CD8-positive, alpha-beta T cell (primary cell): ENCODE measurements at regions of chr2 and their contacts with region 1.

Region 1: GRCh38 chr2:241686649-241687425 is at the start of gene DTYMK:
- DNase-seq: peak; percentile 89 to 98 (median 95)
- ATAC-seq: peak; percentile 95
- H3K4me3 ChIP-seq: peak within 1 kb of the TSS; percentile 87 to 98
- H3K4me3 Mint-ChIP-seq: peak within 1 kb of the TSS; percentile 90
- H3K27ac ChIP-seq: peak within 1 kb of the TSS; percentile 74 to 81
- H3K27ac Mint-ChIP-seq: peak within 1 kb of the TSS; percentile 91
- H3K4me1 ChIP-seq: peaks cover 21% of the 10 kb centered on the region
- H3K4me1 Mint-ChIP-seq: peaks cover 24% of the 10 kb centered on the region
- H3K27me3 ChIP-seq: no peaks in the 10 kb centered on the region
- H3K27me3 Mint-ChIP-seq: no peaks in the 10 kb centered on the region
- CTCF ChIP-seq: no peak
- total RNA-seq, gene DTYMK: 3.7 to 6.0 TPM

Region 2: GRCh38 chr2:241325257-241325656 is 361.6 kb before region 1 on chr2:
- CTCF ChIA-PET with region 1: no interaction called
- POLR2A ChIA-PET with region 1: no interaction called
- intact Hi-C with region 1: no loop called
- DNase-seq: no peak
- ATAC-seq: no peak
- H3K4me3 ChIP-seq: no peak overlapping the region
- H3K4me3 Mint-ChIP-seq: no peak overlapping the region
- H3K27ac ChIP-seq: no peak overlapping the region
- H3K27ac Mint-ChIP-seq: peak overlapping the region; percentile 2
- H3K4me1 ChIP-seq: peaks cover 10% of the 10 kb centered on the region
- H3K4me1 Mint-ChIP-seq: peaks cover 50% of the 10 kb centered on the region
- H3K27me3 ChIP-seq: no peaks in the 10 kb centered on the region
- H3K27me3 Mint-ChIP-seq: no peaks in the 10 kb centered on the region
- CTCF ChIP-seq: no peak

Region 3: GRCh38 chr2:241609859-241610793 is 76.7 kb before region 1 on chr2:
- CTCF ChIA-PET with region 1: no interaction called
- POLR2A ChIA-PET with region 1: no interaction called
- intact Hi-C with region 1: loop called in 1 of 2 experiments (anchors 1 kb)
- DNase-seq: peak; percentile 81 to 96 (median 92)
- ATAC-seq: peak; percentile 99
- H3K4me3 ChIP-seq: peak overlapping the region; percentile 53 to 59
- H3K4me3 Mint-ChIP-seq: peak overlapping the region; percentile 63
- H3K27ac ChIP-seq: peak overlapping the region; percentile 51 to 77
- H3K27ac Mint-ChIP-seq: peak overlapping the region; percentile 72
- H3K4me1 ChIP-seq: peaks cover 23% of the 10 kb centered on the region
- H3K4me1 Mint-ChIP-seq: peaks cover 26% of the 10 kb centered on the region
- H3K27me3 ChIP-seq: no peaks in the 10 kb centered on the region
- H3K27me3 Mint-ChIP-seq: no peaks in the 10 kb centered on the region
- CTCF ChIP-seq: peak; percentile 63

Region 4: DNA sequence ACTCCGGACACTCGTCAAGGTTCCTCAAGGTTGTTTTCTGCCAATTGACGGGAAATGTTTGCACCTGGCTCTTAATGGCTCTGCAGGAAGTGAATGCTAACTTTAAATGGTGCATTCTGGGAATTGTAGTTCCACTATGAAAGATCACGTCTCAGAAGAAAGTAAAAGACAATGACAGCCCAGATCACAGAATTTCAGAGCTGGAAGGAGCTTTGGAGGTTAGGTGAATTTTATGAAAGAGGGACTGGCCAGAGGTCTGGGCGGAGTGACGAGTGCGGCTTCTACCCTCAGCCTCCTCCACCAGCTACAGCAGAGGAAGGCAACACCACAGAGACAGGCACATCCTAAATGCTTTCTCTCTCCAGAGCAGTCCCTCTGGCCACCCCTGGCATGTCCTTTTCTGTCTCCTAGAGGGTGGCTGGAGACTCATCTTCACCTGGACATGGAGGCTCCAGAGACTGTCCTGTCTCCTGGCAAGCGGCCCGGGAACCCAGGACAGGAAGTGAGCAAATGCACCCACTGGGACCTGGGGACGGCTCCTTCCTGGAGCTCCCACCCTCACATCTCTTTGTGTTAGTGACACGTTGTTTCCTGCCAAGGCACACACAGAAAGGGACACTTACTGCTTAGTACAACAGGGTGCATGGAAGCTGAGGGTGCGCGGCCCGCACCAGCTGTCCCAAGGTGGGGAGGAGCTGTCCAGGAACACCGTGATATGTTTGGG is 69.2 kb before region 1 on chr2:
- CTCF ChIA-PET with region 1: no interaction called
- POLR2A ChIA-PET with region 1: no interaction called
- intact Hi-C with region 1: loop called in 1 of 2 experiments (anchors 2 kb)
- DNase-seq: peak in 6 of 9 experiments; percentile 11 to 80 (median 46)
- ATAC-seq: peak; percentile 86
- H3K4me3 ChIP-seq: peak overlapping the region; percentile 55 to 73
- H3K4me3 Mint-ChIP-seq: peak overlapping the region; percentile 89
- H3K27ac ChIP-seq: peak overlapping the region; percentile 61 to 70
- H3K27ac Mint-ChIP-seq: peak overlapping the region; percentile 88
- H3K4me1 ChIP-seq: peaks cover 15% of the 10 kb centered on the region
- H3K4me1 Mint-ChIP-seq: peaks cover 31% of the 10 kb centered on the region
- H3K27me3 ChIP-seq: no peaks in the 10 kb centered on the region
- H3K27me3 Mint-ChIP-seq: no peaks in the 10 kb centered on the region
- CTCF ChIP-seq: no peak

Region 5: DNA sequence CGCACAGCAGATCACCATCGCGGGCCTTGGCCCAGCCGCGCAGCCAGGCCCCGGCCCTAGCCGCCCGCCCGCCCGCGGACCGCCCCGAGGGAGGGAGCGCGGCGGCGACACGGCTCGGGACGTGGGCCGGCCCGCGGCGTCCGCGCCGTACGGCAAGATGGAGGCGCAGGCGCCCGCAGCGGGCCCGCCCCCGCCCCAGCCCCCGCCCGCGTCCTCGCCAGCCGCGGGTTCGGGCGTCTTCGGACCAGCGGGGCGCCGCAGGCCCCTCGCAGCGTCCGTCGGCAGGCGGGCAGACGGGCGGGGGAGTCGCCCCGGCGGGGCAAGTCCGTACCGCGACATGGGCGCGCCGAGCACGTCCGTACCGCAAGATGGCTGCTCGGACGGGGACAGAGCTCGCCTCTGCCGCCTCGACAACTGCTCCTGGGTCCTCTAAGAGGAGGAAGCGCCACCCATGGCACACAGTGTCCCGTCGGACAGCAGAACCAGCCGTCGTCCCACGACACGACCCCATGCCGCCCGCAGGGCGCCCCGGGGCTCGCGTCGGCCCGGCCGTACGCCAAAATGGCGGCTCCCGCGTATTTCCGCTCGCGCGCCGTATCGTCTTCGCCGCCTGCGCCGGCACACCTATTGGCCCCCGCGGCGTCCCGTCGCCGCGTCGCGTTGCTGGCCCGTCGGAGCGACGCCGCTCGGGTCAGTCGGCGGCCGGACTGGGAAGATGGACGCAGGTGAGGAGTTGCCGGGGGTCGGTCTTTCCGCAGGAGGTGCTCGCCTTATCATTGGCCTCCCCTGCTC is 49.6 kb before region 1 on chr2 and contains the starts of genes ATG4B and THAP4:
- CTCF ChIA-PET with region 1: no interaction called
- POLR2A ChIA-PET with region 1: interaction called, 5 read pairs
- intact Hi-C with region 1: loop called (anchors 1 kb)
- DNase-seq: peak; percentile 46 to 88 (median 76)
- ATAC-seq: peak; percentile 71
- H3K4me3 ChIP-seq: peak within 1 kb of the TSS; percentile 83 to 95
- H3K4me3 Mint-ChIP-seq: peak within 1 kb of the TSS; percentile 89
- H3K27ac ChIP-seq: peak within 1 kb of the TSS; percentile 80 to 96
- H3K27ac Mint-ChIP-seq: peak within 1 kb of the TSS; percentile 92
- H3K4me1 ChIP-seq: peaks cover 37% of the 10 kb centered on the region
- H3K4me1 Mint-ChIP-seq: peaks cover 55% of the 10 kb centered on the region
- H3K27me3 ChIP-seq: no peaks in the 10 kb centered on the region
- H3K27me3 Mint-ChIP-seq: no peaks in the 10 kb centered on the region
- CTCF ChIP-seq: no peak
- total RNA-seq, gene ATG4B: 94.0 to 94.5 TPM
- total RNA-seq, gene THAP4: 19.5 to 24.3 TPM

Region 6: DNA sequence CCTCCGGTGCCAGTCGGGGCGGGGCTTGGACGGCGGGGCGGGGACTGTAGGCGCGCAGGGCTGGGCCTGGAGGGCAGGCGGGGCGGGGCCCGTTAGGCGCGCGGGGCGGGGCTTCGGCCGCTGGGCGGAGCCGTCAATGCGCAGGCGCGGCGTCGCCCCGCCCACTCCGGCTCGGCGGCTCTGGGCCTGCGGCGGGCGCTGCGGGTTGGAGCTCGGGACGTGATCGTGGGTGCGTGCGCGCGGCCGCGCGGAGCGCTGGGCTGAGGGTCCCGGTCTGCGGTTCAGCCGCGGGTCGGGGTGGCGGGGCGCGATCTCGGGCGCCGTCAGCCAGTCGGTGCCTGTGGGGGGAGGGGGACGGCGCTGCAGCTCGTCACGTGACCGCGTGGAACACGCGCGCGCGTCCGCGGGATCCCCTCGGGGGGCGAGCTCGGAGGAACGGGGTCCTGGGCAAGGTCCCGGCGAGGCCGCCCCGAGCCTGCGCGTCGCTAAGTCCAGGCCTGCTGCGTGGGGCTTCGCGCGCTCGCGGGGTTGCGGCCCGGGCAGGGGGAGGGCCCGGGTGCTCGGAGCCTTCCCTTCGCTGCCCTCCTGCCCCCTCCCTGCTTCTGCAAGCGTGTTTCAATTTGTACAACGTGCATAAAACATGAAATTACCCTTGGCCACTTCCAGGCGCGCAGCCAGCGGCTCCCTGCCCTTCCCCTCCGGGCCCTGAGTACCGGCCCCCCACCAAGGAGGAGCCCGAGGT is 47.8 kb after region 1 on chr2 and contains the start of gene D2HGDH:
- CTCF ChIA-PET with region 1: no interaction called
- POLR2A ChIA-PET with region 1: interaction called, 7 read pairs
- intact Hi-C with region 1: loop called (anchors 1 to 5 kb)
- DNase-seq: peak; percentile 84 to 97 (median 94)
- ATAC-seq: peak; percentile 92
- H3K4me3 ChIP-seq: peak within 1 kb of the TSS; percentile 68 to 70
- H3K4me3 Mint-ChIP-seq: peak within 1 kb of the TSS; percentile 86
- H3K27ac ChIP-seq: peak within 1 kb of the TSS; percentile 26 to 65
- H3K27ac Mint-ChIP-seq: peak within 1 kb of the TSS; percentile 85
- H3K4me1 ChIP-seq: peaks cover 22% of the 10 kb centered on the region
- H3K4me1 Mint-ChIP-seq: peaks cover 25% of the 10 kb centered on the region
- H3K27me3 ChIP-seq: no peaks in the 10 kb centered on the region
- H3K27me3 Mint-ChIP-seq: no peaks in the 10 kb centered on the region
- CTCF ChIP-seq: no peak
- total RNA-seq, gene D2HGDH: 41.6 to 46.4 TPM